Calu3 (cell line): ENCODE measurements at regions of chr4 and their contacts with region 1.

Region 1: GRCh38 chr4:183407128-183407585 is 37.3 kb upstream of the CDKN2AIP start:
- DNase-seq: peak; percentile 92
- H3K4me3 Mint-ChIP-seq: peak overlapping the region; percentile 74
- H3K27ac Mint-ChIP-seq: peak overlapping the region; percentile 93
- H3K4me1 Mint-ChIP-seq: peaks cover 45% of the 10 kb centered on the region
- H3K27me3 Mint-ChIP-seq: no peaks in the 10 kb centered on the region
- CTCF ChIP-seq: peak; percentile 76

Region 2: GRCh38 chr4:183074296-183074990 is 332.7 kb before region 1 on chr4:
- CTCF ChIA-PET with region 1: no interaction called
- intact Hi-C with region 1: loop called (anchors 10 kb)
- DNase-seq: no peak
- H3K4me3 Mint-ChIP-seq: no peak overlapping the region
- H3K27ac Mint-ChIP-seq: no peak overlapping the region
- H3K4me1 Mint-ChIP-seq: peaks cover 19% of the 10 kb centered on the region
- H3K27me3 Mint-ChIP-seq: no peaks in the 10 kb centered on the region
- CTCF ChIP-seq: no peak

Region 3: GRCh38 chr4:183287309-183287659 is 119.9 kb before region 1 on chr4:
- CTCF ChIA-PET with region 1: no interaction called
- intact Hi-C with region 1: loop called (anchors 1 kb)
- DNase-seq: no peak
- H3K4me3 Mint-ChIP-seq: peak overlapping the region; percentile 47
- H3K27ac Mint-ChIP-seq: peak overlapping the region; percentile 65
- H3K4me1 Mint-ChIP-seq: peaks cover 44% of the 10 kb centered on the region
- H3K27me3 Mint-ChIP-seq: no peaks in the 10 kb centered on the region
- CTCF ChIP-seq: no peak

Region 4: DNA sequence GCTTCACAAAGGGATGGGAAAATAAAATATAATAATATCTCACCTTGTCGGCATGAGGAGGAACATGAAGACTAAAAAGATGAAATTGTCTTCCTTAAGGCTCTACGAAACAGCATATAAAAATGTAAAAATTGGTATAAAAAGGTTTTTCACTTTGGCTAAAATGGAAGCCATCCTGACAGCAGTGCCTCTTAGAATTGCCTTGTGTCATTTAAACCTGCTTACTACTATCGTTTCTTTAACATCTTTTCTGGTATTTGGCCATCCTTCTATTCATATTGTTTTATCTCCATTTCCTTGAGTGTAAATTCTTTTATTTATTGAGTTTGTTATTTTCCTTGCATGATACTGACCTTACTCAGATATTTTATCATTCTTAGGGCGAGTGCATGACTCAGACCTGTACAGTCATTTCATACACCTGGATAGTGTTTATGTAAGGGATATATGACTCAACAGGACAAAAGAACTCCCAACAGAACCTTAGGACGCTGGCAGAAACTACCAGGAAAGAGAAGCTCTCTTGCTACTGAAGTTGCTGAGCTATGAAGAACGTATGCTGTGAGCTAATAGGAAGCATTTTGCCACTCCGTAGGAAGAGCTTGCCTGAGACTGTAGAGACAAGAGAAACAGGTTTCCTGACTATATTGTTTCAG is 31.4 kb after region 1 on chr4:
- CTCF ChIA-PET with region 1: interaction called, 12 read pairs
- intact Hi-C with region 1: loop called (anchors 2 kb)
- DNase-seq: peak; percentile 55
- H3K4me3 Mint-ChIP-seq: peak overlapping the region; percentile 41
- H3K27ac Mint-ChIP-seq: peak overlapping the region; percentile 99
- H3K4me1 Mint-ChIP-seq: peaks cover 37% of the 10 kb centered on the region
- H3K27me3 Mint-ChIP-seq: no peaks in the 10 kb centered on the region
- CTCF ChIP-seq: no peak

Region 5: DNA sequence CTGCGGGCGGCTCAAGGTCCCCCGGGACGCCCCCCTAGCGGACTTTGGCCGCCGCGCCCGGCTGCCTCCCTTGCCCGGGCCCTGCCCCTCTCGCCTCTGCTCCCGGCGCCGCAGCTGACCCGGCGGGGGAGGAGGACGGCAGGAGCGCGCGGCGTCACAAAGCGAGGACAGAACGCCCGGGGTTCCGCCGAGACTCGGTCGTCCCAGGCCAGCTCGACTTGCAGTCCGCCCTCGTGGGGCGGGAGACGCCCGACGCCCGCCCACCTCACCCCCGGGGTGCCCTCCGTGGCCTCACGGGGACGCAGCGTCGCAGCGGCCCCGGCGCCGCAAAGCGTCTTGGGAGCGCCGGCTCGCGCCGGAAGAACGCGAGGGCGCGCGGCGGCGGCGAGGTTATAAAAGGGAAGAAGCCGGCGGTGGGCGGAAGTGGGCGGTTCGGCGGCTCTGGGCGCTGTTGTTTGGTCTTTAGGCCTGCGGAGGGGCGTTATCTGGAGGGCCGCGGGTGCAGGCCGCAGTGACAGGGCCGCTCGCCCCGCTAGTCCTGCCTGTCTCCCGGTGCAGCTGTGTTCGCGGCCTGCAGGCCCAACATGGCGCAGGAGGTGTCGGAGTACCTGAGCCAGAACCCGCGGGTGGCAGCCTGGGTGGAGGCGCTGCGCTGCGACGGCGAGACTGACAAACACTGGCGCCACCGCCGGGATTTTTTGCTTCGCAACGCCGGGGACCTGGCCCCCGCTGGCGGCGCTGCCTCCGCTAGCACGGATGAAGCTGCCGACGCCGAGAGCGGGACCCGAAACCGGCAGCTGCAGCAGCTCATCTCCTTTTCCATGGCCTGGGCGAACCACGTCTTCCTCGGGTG is 37.3 kb after region 1 on chr4 and contains the start of gene CDKN2AIP:
- CTCF ChIA-PET with region 1: interaction called, 11 read pairs
- intact Hi-C with region 1: loop called (anchors 2 kb)
- DNase-seq: peak; percentile 87
- H3K4me3 Mint-ChIP-seq: peak within 1 kb of the TSS; percentile 90
- H3K27ac Mint-ChIP-seq: peak within 1 kb of the TSS; percentile 83
- H3K4me1 Mint-ChIP-seq: peaks cover 25% of the 10 kb centered on the region
- H3K27me3 Mint-ChIP-seq: no peaks in the 10 kb centered on the region
- CTCF ChIP-seq: no peak
- total RNA-seq, gene CDKN2AIP: 17.2 and 17.5 TPM in 2 replicates